Calu3 (cell line): ENCODE measurements at regions of chr3 and their contacts with region 1.

Region 1: DNA sequence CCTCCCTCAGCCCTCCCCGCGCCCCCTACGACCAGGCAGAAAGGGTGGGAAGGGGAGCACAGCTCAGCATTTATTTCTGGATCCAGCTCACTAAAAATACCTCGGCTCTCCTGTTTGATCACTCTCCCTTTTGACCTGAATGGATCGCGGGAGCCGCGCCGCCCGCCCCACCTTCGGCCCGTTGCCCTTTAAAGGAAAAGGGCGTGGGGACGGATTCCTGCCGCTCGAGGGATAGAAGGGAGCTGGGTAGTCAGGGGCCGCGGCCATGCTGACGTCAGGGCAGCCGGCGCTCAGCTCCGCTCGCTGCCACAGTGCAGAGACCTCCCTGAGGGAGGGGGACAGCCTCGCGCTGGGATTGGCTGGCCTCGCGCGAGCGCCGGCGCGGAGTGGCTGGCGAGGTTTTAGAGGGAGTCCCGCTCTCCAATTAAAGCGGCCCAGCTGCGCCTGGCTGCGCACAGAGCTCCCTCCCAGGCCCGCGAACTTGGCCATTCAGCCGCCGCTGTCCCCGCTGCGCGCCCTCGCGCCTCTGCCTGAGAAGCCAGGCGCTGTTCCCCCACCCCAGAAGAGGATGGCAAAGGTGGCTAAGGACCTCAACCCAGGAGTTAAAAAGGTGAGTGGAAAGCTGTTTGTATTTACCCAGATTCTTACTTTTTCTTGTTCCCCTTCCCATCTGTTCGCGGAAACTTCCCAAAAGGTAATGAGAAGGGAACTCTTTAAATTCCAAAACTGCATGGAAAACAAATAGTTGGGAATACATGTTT is at the start of gene LMCD1:
- DNase-seq: peak; percentile 95
- H3K4me3 Mint-ChIP-seq: peak within 1 kb of the TSS; percentile 90
- H3K27ac Mint-ChIP-seq: peak within 1 kb of the TSS; percentile 93
- H3K4me1 Mint-ChIP-seq: peaks cover 62% of the 10 kb centered on the region
- H3K27me3 Mint-ChIP-seq: no peaks in the 10 kb centered on the region
- CTCF ChIP-seq: no peak
- total RNA-seq, gene LMCD1: 21.9 and 46.0 TPM in 2 replicates

Region 2: GRCh38 chr3:8324740-8325139 is 176.8 kb before region 1 on chr3:
- CTCF ChIA-PET with region 1: interaction called, 4 read pairs
- intact Hi-C with region 1: loop called (anchors 5 kb)
- DNase-seq: peak; percentile 62
- H3K4me3 Mint-ChIP-seq: no peak overlapping the region
- H3K27ac Mint-ChIP-seq: no peak overlapping the region
- H3K4me1 Mint-ChIP-seq: no peaks in the 10 kb centered on the region
- H3K27me3 Mint-ChIP-seq: no peaks in the 10 kb centered on the region
- CTCF ChIP-seq: no peak

Region 3: DNA sequence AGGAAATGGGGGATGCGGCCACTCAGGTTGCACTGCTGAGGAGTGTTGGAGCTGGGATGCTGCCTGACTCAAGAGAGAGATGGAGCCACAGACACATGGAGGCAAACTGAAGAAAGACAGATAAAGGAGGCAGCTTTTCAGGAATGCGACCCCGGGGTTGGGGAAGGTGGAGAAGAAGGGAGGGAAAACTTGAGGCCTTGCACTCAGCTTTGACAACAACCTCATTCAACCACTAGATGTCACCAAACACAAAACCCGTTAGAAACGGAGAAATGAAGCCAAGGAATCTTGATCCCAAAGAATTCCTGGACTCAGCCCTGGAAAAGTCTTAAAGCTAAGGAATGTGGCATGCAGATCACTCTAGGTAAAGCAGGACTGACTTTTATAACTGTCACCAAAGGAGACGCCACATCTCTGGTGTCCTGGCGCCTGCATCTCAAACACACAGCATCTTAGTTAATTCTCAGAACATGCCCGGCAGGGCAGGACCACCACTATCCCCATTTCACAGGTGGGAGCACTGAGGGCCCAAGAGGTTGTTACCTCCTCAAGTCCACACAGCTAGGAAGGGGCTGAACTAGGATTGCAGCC is 59.5 kb before region 1 on chr3:
- CTCF ChIA-PET with region 1: interaction called, 46 read pairs
- intact Hi-C with region 1: loop called (anchors 1 kb)
- DNase-seq: peak; percentile 28
- H3K4me3 Mint-ChIP-seq: no peak overlapping the region
- H3K27ac Mint-ChIP-seq: no peak overlapping the region
- H3K4me1 Mint-ChIP-seq: peaks cover 24% of the 10 kb centered on the region
- H3K27me3 Mint-ChIP-seq: no peaks in the 10 kb centered on the region
- CTCF ChIP-seq: peak; percentile 44

Region 4: DNA sequence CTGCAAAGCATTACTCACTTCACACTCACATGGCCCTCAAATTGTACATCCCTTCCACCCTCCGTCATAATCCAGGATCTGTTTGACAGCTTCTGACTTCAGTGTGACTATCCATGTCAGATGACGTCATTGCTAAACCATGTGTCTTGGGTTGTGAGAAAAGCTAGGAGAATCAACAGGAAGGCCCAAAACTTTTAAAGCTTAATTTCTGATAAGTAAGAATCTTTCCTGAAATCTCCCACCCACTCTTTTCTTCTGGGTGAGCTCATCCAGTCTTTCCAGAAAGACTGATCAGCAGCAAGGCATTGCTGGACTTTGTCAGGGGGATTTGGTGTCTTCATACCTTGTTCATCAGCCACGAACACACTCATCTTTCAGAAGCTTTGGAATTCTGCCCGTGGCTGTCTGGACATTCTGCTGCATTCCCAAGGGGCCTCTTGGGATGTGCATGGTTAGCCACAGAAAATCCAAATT is 11.4 kb before region 1 on chr3:
- CTCF ChIA-PET with region 1: interaction called, 14 read pairs
- intact Hi-C with region 1: no loop called
- DNase-seq: no peak
- H3K4me3 Mint-ChIP-seq: no peak overlapping the region
- H3K27ac Mint-ChIP-seq: no peak overlapping the region
- H3K4me1 Mint-ChIP-seq: peaks cover 10% of the 10 kb centered on the region
- H3K27me3 Mint-ChIP-seq: no peaks in the 10 kb centered on the region
- CTCF ChIP-seq: no peak

Region 5: GRCh38 chr3:8529738-8530525 is 28.4 kb after region 1 on chr3:
- CTCF ChIA-PET with region 1: no interaction called
- intact Hi-C with region 1: loop called (anchors 2 kb)
- DNase-seq: peak; percentile 23
- H3K4me3 Mint-ChIP-seq: no peak overlapping the region
- H3K27ac Mint-ChIP-seq: peak overlapping the region; percentile 9
- H3K4me1 Mint-ChIP-seq: peaks cover 35% of the 10 kb centered on the region
- H3K27me3 Mint-ChIP-seq: no peaks in the 10 kb centered on the region
- CTCF ChIP-seq: no peak

Region 6: GRCh38 chr3:8560366-8561007 is 58.9 kb after region 1 on chr3:
- CTCF ChIA-PET with region 1: no interaction called
- intact Hi-C with region 1: no loop called
- DNase-seq: no peak
- H3K4me3 Mint-ChIP-seq: no peak overlapping the region
- H3K27ac Mint-ChIP-seq: no peak overlapping the region
- H3K4me1 Mint-ChIP-seq: no peaks in the 10 kb centered on the region
- H3K27me3 Mint-ChIP-seq: no peaks in the 10 kb centered on the region
- CTCF ChIP-seq: no peak

Region 7: GRCh38 chr3:8622873-8623691 is 121.5 kb after region 1 on chr3:
- CTCF ChIA-PET with region 1: no interaction called
- intact Hi-C with region 1: loop called (anchors 5 kb)
- DNase-seq: peak; percentile 77
- H3K4me3 Mint-ChIP-seq: no peak overlapping the region
- H3K27ac Mint-ChIP-seq: no peak overlapping the region
- H3K4me1 Mint-ChIP-seq: peaks cover 25% of the 10 kb centered on the region
- H3K27me3 Mint-ChIP-seq: no peaks in the 10 kb centered on the region
- CTCF ChIP-seq: peak; percentile 85